CD8-positive, alpha-beta memory T cell (primary cell): ENCODE measurements at regions of chr12 and their contacts with region 1.

Region 1: DNA sequence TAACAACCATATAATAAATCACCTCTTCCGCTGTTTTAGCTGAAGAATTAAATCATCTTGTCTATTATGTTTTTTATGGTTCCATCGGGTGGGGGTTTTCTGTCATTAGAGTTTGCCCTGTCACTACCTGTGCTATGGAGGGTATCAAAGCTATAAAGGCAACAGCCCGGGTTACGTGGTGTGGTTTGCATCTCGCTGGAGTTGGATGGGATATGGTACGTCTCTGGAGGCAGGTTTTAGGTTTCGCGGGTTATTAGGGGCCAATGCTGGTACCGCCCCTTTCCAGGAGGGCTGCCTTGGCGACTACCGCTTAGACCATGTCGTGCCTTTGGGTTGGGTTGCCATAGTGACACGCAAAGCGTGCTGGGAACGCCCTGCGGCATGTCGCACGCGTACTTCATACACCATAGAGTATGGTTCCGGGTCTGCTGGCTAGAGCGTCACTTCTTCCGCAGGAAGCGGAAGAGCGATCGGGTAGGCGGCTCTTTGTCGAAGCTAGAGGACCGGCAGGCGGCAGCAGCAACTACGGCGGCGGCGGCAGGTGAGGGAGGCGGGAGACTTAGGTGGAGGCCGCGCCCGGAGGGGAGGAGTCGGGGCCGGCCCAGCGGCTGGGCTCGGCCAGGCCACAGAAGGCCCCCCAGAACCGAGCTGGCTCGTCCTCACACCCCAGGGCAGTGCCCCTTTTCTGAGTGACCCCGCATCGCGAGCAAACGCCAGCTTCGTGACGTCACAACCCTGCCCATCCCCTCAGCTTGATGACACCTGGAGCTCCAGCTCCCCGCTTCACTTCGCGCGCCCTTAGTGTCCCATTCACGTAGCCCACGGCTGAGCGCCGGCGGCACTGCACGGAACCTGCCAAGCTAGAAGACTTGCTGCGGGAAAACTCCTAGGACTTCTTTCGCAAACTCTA is at the start of gene ZC3H10:
- DNase-seq: peak; percentile 93 to 100 (median 98)
- H3K4me3 ChIP-seq: peak within 1 kb of the TSS; percentile 93
- H3K4me3 Mint-ChIP-seq: peak within 1 kb of the TSS; percentile 89 to 100 (median 99)
- H3K27ac ChIP-seq: peak within 1 kb of the TSS; percentile 99
- H3K27ac Mint-ChIP-seq: peak within 1 kb of the TSS; percentile 96 to 100 (median 98)
- H3K4me1 ChIP-seq: peaks cover 34% of the 10 kb centered on the region
- H3K4me1 Mint-ChIP-seq: peaks cover 37 to 43% (median 38%) of the 10 kb centered on the region in 3 donors
- H3K27me3 ChIP-seq: no peaks in the 10 kb centered on the region
- H3K27me3 Mint-ChIP-seq: peaks cover 0 to 10% of the 10 kb centered on the region in 2 donors
- total RNA-seq, gene ZC3H10: 8.1 to 9.0 TPM

Region 2: DNA sequence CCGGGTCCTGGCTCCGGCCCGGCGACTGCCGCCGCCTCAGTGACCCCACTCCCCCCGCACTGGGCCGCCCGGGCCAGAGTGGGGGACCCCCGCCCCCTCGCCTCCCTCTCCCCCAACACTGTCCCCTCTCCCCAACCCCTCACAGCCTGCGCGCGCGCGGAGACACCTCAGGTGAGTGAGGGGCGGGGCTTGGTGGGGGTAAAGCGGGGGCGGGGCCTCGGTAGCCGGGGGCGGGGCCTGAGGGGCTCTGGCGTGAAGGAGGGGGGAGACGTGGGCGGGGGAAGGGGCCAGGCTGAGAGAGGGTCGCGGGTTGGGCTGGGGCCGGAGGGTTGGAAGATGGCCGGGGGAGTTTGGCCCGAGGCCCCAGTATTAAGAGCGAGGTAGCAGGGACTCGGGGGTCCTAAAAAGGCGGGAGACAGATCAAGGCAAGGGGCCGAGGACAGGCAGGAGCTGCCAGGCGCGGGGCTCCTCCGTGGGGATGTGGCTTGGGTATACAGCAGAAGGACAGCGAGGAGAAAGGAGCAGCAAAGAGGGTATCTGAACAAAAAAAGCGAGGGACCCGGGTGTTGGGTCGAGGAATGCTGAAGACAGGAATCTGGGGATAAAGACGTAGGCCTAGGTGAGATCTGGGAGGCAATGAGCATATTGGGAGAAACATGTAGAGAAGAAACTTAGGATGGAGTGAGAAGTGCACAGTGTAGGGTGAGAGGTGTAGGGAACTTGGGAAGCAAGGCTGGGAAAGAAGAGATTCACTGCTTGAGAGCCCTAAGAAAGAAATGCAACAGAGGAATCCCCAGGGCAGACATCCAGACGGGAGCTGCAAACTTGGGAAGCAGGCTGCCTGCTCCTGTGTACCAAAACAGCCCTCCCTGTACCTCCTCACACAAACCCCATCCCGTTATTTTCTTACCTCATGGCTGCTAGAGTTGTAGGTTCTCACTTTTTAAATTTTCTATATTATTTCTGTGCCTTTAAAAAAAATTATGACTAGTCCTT is 110.2 kb before region 1 on chr12:
- CTCF ChIA-PET with region 1: no interaction called
- POLR2A ChIA-PET with region 1: no interaction called
- DNase-seq: peak; percentile 47 to 77 (median 66)
- H3K4me3 ChIP-seq: peak overlapping the region; percentile 61
- H3K4me3 Mint-ChIP-seq: peak overlapping the region; percentile 75 to 92 (median 85)
- H3K27ac ChIP-seq: peak overlapping the region; percentile 45
- H3K27ac Mint-ChIP-seq: peak overlapping the region in 7 of 8 donors; percentile 5 to 94 (median 89)
- H3K4me1 ChIP-seq: peaks cover 11% of the 10 kb centered on the region
- H3K4me1 Mint-ChIP-seq: peaks cover 17 to 28% (median 19%) of the 10 kb centered on the region in 3 donors
- H3K27me3 ChIP-seq: no peaks in the 10 kb centered on the region
- H3K27me3 Mint-ChIP-seq: peaks cover 0 to 2% of the 10 kb centered on the region in 2 donors

Region 3: DNA sequence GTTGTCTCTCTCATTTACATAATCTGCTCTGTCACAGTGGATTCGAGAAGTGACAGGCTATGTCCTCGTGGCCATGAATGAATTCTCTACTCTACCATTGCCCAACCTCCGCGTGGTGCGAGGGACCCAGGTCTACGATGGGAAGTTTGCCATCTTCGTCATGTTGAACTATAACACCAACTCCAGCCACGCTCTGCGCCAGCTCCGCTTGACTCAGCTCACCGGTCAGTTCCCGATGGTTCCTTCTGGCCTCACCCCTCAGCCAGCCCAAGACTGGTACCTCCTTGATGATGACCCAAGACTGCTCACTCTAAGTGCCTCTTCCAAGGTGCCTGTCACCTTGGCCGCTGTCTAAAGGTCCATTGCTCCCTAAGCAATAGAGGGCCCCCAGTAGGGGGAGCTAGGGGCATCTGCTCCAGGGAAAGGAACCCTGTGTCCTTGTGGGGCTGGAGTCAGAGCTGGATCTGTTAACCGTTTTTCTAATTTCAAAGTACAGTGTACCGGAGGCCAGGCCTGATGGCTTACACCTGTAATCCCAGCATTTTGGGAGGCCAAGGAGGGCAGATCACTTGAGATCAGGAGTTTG is 33.0 kb before region 1 on chr12:
- CTCF ChIA-PET with region 1: interaction called, 15 read pairs
- POLR2A ChIA-PET with region 1: interaction called, 4 read pairs
- DNase-seq: no peak
- H3K4me3 ChIP-seq: no peak overlapping the region
- H3K4me3 Mint-ChIP-seq: no peak overlapping the region
- H3K27ac ChIP-seq: no peak overlapping the region
- H3K27ac Mint-ChIP-seq: peak overlapping the region in 2 of 8 donors; percentile 33 to 71
- H3K4me1 ChIP-seq: no peaks in the 10 kb centered on the region
- H3K4me1 Mint-ChIP-seq: peaks cover 3 to 11% (median 4%) of the 10 kb centered on the region in 3 donors
- H3K27me3 ChIP-seq: peaks cover 6% of the 10 kb centered on the region
- H3K27me3 Mint-ChIP-seq: peaks cover 7 to 15% of the 10 kb centered on the region in 2 donors

Region 4: DNA sequence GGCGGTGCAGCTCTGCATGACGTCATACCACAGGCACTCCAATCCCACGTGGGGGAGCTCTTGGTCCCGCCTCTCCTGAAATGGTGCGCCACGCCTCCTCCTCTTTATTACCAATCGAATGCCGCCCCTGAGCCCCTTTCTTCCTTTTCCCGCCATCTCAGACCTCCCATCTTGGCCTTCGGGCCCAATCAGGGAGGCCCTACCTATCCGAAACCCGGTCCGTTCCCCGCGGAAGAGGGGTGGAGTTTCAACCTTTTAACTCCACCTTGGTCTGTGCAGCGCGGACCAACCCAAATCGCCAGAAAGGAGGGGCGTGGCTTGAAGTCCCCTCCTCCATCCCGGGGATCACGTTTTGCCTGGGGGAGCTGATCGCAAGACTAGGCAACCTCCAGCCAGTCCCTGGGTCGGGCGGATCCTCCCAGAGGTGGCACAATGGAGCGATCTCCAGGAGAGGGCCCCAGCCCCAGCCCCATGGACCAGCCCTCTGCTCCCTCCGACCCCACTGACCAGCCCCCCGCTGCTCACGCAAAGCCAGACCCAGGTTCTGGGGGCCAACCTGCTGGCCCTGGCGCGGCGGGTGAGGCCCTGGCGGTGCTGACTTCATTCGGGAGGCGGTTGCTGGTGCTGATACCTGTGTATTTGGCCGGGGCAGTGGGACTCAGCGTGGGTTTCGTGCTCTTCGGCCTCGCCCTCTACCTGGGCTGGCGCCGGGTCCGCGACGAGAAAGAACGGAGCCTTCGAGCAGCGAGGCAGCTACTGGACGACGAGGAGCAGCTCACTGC is 10.0 kb after region 1 on chr12 and contains the start of gene ESYT1:
- CTCF ChIA-PET with region 1: interaction called, 27 read pairs
- POLR2A ChIA-PET with region 1: interaction called, 49 read pairs
- DNase-seq: peak; percentile 94 to 99 (median 99)
- H3K4me3 ChIP-seq: peak within 1 kb of the TSS; percentile 90
- H3K4me3 Mint-ChIP-seq: peak within 1 kb of the TSS; percentile 86 to 99 (median 98)
- H3K27ac ChIP-seq: peak within 1 kb of the TSS; percentile 90
- H3K27ac Mint-ChIP-seq: peak within 1 kb of the TSS; percentile 90 to 99 (median 98)
- H3K4me1 ChIP-seq: peaks cover 50% of the 10 kb centered on the region
- H3K4me1 Mint-ChIP-seq: peaks cover 59 to 71% (median 69%) of the 10 kb centered on the region in 3 donors
- H3K27me3 ChIP-seq: no peaks in the 10 kb centered on the region
- H3K27me3 Mint-ChIP-seq: peaks cover 0 to 2% of the 10 kb centered on the region in 2 donors
- total RNA-seq, gene ESYT1: 185 to 191 TPM

Region 5: DNA sequence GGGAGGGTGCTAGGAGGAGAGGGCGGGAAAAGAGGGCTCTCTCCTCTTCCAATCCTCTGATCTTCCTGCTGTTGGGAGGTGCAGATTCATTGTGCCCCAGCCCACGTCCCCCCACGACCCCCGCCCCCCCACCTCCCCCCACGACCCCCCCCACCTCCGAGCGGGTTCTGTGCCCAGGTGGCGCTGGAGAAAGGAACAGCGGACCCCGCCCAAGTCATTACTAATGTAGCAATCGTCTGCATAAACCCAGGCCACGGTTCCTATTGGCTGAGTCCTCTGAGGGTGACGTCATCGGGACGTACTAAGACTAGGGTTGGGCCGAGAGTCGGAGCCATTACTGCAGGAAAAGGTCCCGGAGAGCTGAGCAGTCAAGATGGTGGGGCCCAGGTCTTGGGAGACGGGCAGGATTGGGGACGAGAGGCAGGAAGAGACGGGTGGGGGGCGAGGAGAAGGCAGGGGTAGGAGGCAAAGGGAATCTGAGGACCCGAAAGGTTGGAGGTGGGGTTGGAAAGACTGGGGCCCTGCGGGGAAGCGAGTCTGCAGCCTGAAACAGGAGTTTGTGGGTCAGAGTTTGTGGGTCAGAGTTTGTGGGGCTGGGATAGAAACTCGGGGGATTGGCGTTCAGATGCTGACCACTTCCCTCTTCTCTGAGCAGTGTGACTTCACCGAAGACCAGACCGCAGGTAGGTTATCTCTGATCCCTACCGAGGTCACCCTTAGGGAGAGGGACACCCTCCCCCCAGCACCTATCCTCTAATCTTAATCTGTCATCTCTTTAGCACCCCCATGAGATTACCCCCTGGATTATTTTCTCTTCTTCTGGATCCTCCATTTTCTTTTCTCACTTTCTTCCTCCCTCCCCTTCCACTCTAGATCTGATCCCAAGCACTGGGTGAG is 40.2 kb after region 1 on chr12 and contains the start of gene MYL6:
- CTCF ChIA-PET with region 1: interaction called, 16 read pairs
- POLR2A ChIA-PET with region 1: interaction called, 3 read pairs
- DNase-seq: peak; percentile 84 to 96 (median 88)
- H3K4me3 ChIP-seq: peak within 1 kb of the TSS; percentile 80
- H3K4me3 Mint-ChIP-seq: peak within 1 kb of the TSS; percentile 92 to 100 (median 95)
- H3K27ac ChIP-seq: peak within 1 kb of the TSS; percentile 94
- H3K27ac Mint-ChIP-seq: peak within 1 kb of the TSS; percentile 87 to 100 (median 96)
- H3K4me1 ChIP-seq: peaks cover 38% of the 10 kb centered on the region
- H3K4me1 Mint-ChIP-seq: peaks cover 38 to 48% (median 41%) of the 10 kb centered on the region in 3 donors
- H3K27me3 ChIP-seq: no peaks in the 10 kb centered on the region
- H3K27me3 Mint-ChIP-seq: no peaks in the 10 kb centered on the region
- total RNA-seq, gene MYL6: 1,010 to 1,017 TPM

Region 6: DNA sequence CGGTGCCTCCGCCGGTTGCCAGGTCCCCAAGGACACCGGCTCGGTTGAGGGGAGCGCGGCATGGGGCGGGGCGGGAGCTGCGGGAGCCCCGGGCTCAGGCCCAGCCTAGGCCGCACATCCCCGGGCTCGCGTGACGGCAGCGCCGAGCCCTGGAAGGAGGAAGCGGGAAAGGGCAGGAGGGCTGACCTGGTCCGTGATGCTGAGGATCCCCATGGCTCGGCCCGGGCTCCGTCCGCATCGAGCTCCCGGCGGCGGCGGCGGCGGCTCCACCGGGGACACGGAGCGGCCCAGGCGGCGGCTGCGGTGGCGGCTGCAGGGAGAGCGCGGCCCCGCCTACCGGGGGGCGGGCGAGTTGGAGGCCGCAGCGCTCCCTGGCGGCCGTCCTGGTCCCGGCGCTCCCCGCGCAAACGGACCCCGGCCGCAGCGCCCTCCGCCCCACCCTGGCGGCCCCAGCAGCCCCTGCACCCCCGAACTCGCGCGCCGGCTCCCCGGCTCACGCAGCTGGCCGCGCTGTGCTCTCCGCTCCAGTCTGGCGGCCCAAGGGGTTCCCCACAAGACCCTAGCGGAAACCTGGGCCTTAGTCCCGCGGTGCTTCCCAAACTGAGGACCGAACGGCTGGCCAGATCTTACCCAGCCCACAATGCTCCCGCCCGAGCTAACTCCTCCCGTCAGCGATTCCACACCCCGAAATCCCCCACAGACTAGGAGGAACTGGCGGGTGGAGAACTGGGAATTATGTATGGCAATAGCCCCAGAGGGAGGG is 140.2 kb after region 1 on chr12 and contains the start of gene ANKRD52:
- CTCF ChIA-PET with region 1: interaction called, 19 read pairs
- POLR2A ChIA-PET with region 1: interaction called, 5 read pairs
- DNase-seq: peak; percentile 75 to 86 (median 83)
- H3K4me3 ChIP-seq: peak within 1 kb of the TSS; percentile 92
- H3K4me3 Mint-ChIP-seq: peak within 1 kb of the TSS; percentile 90 to 95 (median 91)
- H3K27ac ChIP-seq: peak within 1 kb of the TSS; percentile 86
- H3K27ac Mint-ChIP-seq: peak within 1 kb of the TSS; percentile 81 to 96 (median 92)
- H3K4me1 ChIP-seq: peaks cover 23% of the 10 kb centered on the region
- H3K4me1 Mint-ChIP-seq: peaks cover 25 to 37% (median 29%) of the 10 kb centered on the region in 3 donors
- H3K27me3 ChIP-seq: no peaks in the 10 kb centered on the region
- H3K27me3 Mint-ChIP-seq: no peaks in the 10 kb centered on the region
- total RNA-seq, gene ANKRD52: 67.0 to 69.9 TPM